ENCODE measurements at regions of chr10 and their contacts with region 1.

Region 1: GRCh38 chr10:34732926-34733325 is 82.2 kb downstream of the PARD3 start:
- DNase-seq: no peak
- ATAC-seq: peak; percentile 80
- H3K4me3 Mint-ChIP-seq: no peak overlapping the region
- H3K27ac Mint-ChIP-seq: peak overlapping the region; percentile 76; the same call in 1 of the 2 replicates
- H3K4me1 Mint-ChIP-seq: peaks cover 34% of the 10 kb centered on the region
- H3K27me3 Mint-ChIP-seq: no peaks in the 10 kb centered on the region
- CTCF ChIP-seq: 0 out of 2 replicates have a peak, but pooled peaks have one; percentile 34

Region 2: GRCh38 chr10:34655286-34656170 is 77.4 kb before region 1 on chr10:
- CTCF ChIA-PET with region 1: interaction called, 15 read pairs
- POLR2A ChIA-PET with region 1: no interaction called
- DNase-seq: peak; percentile 57
- ATAC-seq: peak; percentile 48
- H3K4me3 Mint-ChIP-seq: no peak overlapping the region; the same call in 1 of the 2 replicates
- H3K27ac Mint-ChIP-seq: peak overlapping the region; percentile 88
- H3K4me1 Mint-ChIP-seq: peaks cover 89% of the 10 kb centered on the region
- H3K27me3 Mint-ChIP-seq: no peaks in the 10 kb centered on the region
- CTCF ChIP-seq: peak; percentile 64

Region 3: DNA sequence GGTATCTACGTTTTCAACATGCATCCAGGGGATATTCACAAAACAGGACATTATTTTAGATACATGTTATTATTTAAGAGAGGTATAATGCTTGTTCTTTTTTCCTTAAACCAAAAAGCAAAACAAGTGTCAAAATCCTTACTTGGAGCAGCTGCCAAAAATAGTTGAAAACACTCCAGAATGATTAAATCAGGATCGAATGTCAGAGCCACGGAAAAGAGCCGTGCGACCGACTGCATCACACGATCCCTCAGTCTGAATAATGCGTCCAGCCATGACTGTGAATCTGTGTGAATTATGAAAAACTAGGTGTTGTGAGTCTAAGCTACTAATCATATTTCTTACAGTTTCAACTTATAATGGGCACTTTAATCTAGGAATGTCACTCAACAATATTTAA is 43.9 kb before region 1 on chr10:
- CTCF ChIA-PET with region 1: interaction called, 11 read pairs
- POLR2A ChIA-PET with region 1: no interaction called
- DNase-seq: no peak
- ATAC-seq: no peak
- H3K4me3 Mint-ChIP-seq: no peak overlapping the region
- H3K27ac Mint-ChIP-seq: no peak overlapping the region; the same call in 1 of the 2 replicates
- H3K4me1 Mint-ChIP-seq: peaks cover 21% of the 10 kb centered on the region
- H3K27me3 Mint-ChIP-seq: no peaks in the 10 kb centered on the region
- CTCF ChIP-seq: no peak

Region 4: DNA sequence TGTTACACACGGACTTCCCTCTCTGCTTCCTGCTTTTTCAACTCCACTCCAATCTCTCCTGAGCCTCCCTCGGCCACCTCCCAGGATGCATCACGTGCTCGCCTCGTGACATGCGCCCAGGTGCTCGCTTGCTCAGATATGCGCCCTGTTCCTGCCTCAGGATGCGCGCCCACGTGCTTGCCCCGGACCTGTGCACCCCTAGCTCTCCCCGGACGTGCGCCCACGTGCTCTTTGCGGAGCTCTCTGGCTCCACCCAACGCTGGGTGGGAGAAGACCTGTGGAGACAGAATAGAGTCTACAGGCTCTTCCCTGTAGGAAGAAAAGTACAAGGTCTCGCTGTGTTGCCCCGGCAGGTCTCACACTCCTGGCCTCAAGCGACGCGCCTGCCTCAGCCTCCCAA is 59.0 kb after region 1 on chr10:
- CTCF ChIA-PET with region 1: interaction called, 16 read pairs
- POLR2A ChIA-PET with region 1: no interaction called
- DNase-seq: no peak
- ATAC-seq: peak; percentile 84
- H3K4me3 Mint-ChIP-seq: no peak overlapping the region
- H3K27ac Mint-ChIP-seq: peak overlapping the region; percentile 90
- H3K4me1 Mint-ChIP-seq: peaks cover 51% of the 10 kb centered on the region
- H3K27me3 Mint-ChIP-seq: no peaks in the 10 kb centered on the region
- CTCF ChIP-seq: no peak

Region 5: GRCh38 chr10:34808801-34809745 is 76.1 kb after region 1 on chr10:
- CTCF ChIA-PET with region 1: interaction called, 32 read pairs
- POLR2A ChIA-PET with region 1: no interaction called
- DNase-seq: peak; percentile 55
- ATAC-seq: peak; percentile 72
- H3K4me3 Mint-ChIP-seq: peak overlapping the region; percentile 47
- H3K27ac Mint-ChIP-seq: peak overlapping the region; percentile 89
- H3K4me1 Mint-ChIP-seq: peaks cover 63% of the 10 kb centered on the region
- H3K27me3 Mint-ChIP-seq: no peaks in the 10 kb centered on the region
- CTCF ChIP-seq: no peak

Region 6: DNA sequence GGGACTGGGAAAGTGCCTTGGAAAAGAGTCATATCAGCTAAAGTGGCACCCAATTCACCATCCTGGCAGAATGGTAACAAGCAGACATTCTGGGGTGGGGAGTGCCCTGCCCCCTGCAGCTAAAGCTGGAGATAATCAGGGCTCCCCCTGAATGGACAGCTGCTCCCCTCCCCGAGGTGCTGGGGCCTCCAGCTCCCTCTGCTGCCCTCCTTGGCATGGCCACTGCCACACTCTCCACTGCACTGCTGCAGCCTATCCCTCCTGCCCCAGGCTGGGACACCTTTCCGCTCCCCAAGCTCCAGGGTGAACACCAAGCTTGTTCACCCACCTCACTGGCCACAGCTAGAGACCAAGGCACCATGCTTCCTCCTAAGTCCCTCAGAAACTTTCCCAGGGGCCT is 91.9 kb after region 1 on chr10:
- CTCF ChIA-PET with region 1: interaction called, 10 read pairs
- POLR2A ChIA-PET with region 1: no interaction called
- DNase-seq: peak; percentile 38
- ATAC-seq: peak; percentile 87
- H3K4me3 Mint-ChIP-seq: no peak overlapping the region
- H3K27ac Mint-ChIP-seq: no peak overlapping the region; the same call in 1 of the 2 replicates
- H3K4me1 Mint-ChIP-seq: peaks cover 13% of the 10 kb centered on the region
- H3K27me3 Mint-ChIP-seq: no peaks in the 10 kb centered on the region
- CTCF ChIP-seq: no peak